ENCODE measurements at regions of chr19 and their contacts with region 1.

Region 1: GRCh38 chr19:18281082-18282020 is at the start of gene JUND:
- DNase-seq: peak; percentile 97
- H3K4me3 Mint-ChIP-seq: peak within 1 kb of the TSS; percentile 87
- H3K27ac Mint-ChIP-seq: peak within 1 kb of the TSS; percentile 98
- H3K4me1 Mint-ChIP-seq: peaks cover 13% of the 10 kb centered on the region
- H3K27me3 Mint-ChIP-seq: no peaks in the 10 kb centered on the region
- CTCF ChIP-seq: no peak
- total RNA-seq, gene JUND: 120 and 123 TPM in 2 replicates

Region 2: GRCh38 chr19:18063463-18063862 is 217.9 kb before region 1 on chr19:
- CTCF ChIA-PET with region 1: no interaction called
- POLR2A ChIA-PET with region 1: no interaction called
- intact Hi-C with region 1: no loop called
- DNase-seq: peak; percentile 27
- H3K4me3 Mint-ChIP-seq: no peak overlapping the region
- H3K27ac Mint-ChIP-seq: no peak overlapping the region
- H3K4me1 Mint-ChIP-seq: no peaks in the 10 kb centered on the region
- H3K27me3 Mint-ChIP-seq: no peaks in the 10 kb centered on the region
- CTCF ChIP-seq: no peak

Region 3: DNA sequence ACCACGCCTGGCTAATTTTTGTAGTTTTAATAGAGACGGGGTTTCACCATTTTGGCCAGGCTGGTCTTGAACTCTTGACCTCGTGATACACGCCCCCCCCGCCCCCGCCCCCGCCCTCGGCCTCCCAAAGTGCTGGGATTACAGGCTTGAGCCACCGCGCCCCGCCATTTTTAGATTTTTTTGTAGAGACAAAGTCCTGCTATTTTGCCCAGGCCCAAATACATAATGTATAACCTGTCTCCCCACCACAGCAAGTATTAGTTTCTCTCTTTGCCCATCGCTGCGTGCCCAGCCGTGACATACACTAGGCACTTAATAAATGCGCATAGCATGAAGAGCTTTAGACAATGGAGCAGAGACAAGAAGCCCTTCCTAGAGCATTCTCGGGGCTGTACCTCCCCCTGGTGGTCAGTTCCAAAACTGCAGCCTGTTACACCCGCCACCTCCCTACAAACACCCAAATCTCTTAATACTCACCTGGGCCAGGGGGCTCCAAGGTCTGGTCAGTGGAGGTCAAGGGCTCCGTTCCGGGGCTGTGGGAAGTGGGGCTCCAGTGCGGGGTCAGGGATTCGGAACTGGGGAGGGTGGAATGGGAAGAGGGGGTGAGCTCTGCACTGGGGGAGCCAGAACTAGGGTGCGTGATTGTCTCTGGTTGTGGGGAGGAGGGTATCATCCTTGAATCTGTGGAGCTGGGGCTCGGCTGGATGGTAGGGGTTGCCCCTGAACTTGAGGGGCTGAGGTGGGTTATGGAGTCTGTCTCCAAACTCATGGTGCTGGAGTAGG is 29.6 kb before region 1 on chr19:
- CTCF ChIA-PET with region 1: interaction called, 13 read pairs
- POLR2A ChIA-PET with region 1: interaction called, 6 read pairs
- intact Hi-C with region 1: no loop called
- DNase-seq: peak; percentile 76
- H3K4me3 Mint-ChIP-seq: no peak overlapping the region
- H3K27ac Mint-ChIP-seq: no peak overlapping the region
- H3K4me1 Mint-ChIP-seq: no peaks in the 10 kb centered on the region
- H3K27me3 Mint-ChIP-seq: no peaks in the 10 kb centered on the region
- CTCF ChIP-seq: peak; percentile 89

Region 4: DNA sequence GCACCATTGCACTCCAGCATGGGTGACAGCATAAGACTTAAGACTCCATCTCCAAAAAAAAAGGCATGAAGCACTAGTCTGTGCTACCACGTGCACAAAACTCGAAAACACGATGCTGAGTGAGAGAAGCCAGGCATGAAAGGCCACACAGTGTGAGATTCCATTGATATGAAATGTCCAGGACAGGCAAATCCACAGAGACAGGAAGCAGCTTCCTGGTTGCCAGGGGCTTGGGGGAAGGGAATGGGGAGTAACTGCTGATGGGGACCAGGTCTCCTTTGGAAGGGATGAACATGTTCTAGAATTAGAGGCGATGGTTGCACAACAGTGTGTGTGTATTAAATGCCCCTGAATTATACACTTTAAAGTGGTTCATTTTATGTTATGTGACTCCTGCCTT is 16.0 kb after region 1 on chr19:
- CTCF ChIA-PET with region 1: interaction called, 15 read pairs
- POLR2A ChIA-PET with region 1: interaction called, 170 read pairs
- intact Hi-C with region 1: loop called (anchors 1 kb)
- DNase-seq: no peak
- H3K4me3 Mint-ChIP-seq: no peak overlapping the region
- H3K27ac Mint-ChIP-seq: no peak overlapping the region
- H3K4me1 Mint-ChIP-seq: peaks cover 20% of the 10 kb centered on the region
- H3K27me3 Mint-ChIP-seq: no peaks in the 10 kb centered on the region
- CTCF ChIP-seq: no peak

Region 5: GRCh38 chr19:18328340-18329034 is 47.1 kb after region 1 on chr19:
- CTCF ChIA-PET with region 1: interaction called, 257 read pairs
- POLR2A ChIA-PET with region 1: interaction called, 178 read pairs
- intact Hi-C with region 1: loop called (anchors 1 kb)
- DNase-seq: peak; percentile 99
- H3K4me3 Mint-ChIP-seq: peak overlapping the region; percentile 67
- H3K27ac Mint-ChIP-seq: no peak overlapping the region
- H3K4me1 Mint-ChIP-seq: peaks cover 12% of the 10 kb centered on the region
- H3K27me3 Mint-ChIP-seq: no peaks in the 10 kb centered on the region
- CTCF ChIP-seq: peak; percentile 80

Region 6: GRCh38 chr19:18408053-18408476 is 126.7 kb after region 1 on chr19:
- CTCF ChIA-PET with region 1: interaction called, 7 read pairs
- POLR2A ChIA-PET with region 1: interaction called, 13 read pairs
- intact Hi-C with region 1: loop called (anchors 1 kb)
- DNase-seq: no peak
- H3K4me3 Mint-ChIP-seq: no peak overlapping the region
- H3K27ac Mint-ChIP-seq: no peak overlapping the region
- H3K4me1 Mint-ChIP-seq: peaks cover 6% of the 10 kb centered on the region
- H3K27me3 Mint-ChIP-seq: no peaks in the 10 kb centered on the region
- CTCF ChIP-seq: no peak

Measured in MCF 10A (cell line).